ENCODE measurements at regions of chrX and their contacts with region 1.

Region 1: GRCh38 chrX:97267381-97268181 is 383.9 kb downstream of the RPA4 start:
- DNase-seq: no peak
- ATAC-seq: no peak
- H3K4me3 ChIP-seq: no peak overlapping the region
- H3K27ac ChIP-seq: no peak overlapping the region
- H3K4me1 ChIP-seq: peaks cover 0 to 3% (median 0%) of the 10 kb centered on the region in 12 donors
- H3K27me3 ChIP-seq: no peaks in the 10 kb centered on the region
- CTCF ChIP-seq: no peak
- POLR2A ChIP-seq: no peak

Region 2: DNA sequence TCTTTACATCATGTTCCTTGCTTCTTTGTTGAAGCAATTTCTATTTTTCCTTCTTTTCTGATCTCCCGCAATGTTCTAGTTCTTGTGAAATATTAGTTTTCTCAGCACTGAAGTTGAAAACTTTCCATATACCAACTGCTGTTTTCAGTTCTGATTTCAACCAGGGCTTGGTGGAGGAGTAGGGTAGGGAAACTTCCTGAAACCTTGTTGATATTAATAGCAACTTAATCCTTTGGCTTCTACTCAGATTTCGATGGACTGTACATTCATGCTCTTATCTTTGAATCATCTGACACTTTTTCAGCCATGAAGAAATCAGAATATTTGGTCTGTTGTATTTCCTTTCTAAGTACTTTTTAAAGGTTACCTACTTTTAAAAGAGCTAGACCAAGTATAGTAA is 68.1 kb before region 1 on chrX:
- intact Hi-C with region 1: no loop called
- DNase-seq: no peak
- ATAC-seq: no peak
- H3K4me3 ChIP-seq: no peak overlapping the region
- H3K27ac ChIP-seq: no peak overlapping the region
- H3K4me1 ChIP-seq: no peaks in the 10 kb centered on the region
- H3K27me3 ChIP-seq: peaks cover 0 to 6% (median 0%) of the 10 kb centered on the region in 9 donors
- CTCF ChIP-seq: no peak
- POLR2A ChIP-seq: no peak

Region 3: GRCh38 chrX:97229318-97229717 is 38.3 kb before region 1 on chrX:
- intact Hi-C with region 1: loop called in 1 of 10 experiments (anchors 10 kb)
- DNase-seq: no peak
- ATAC-seq: no peak
- H3K4me3 ChIP-seq: no peak overlapping the region
- H3K27ac ChIP-seq: no peak overlapping the region
- H3K4me1 ChIP-seq: no peaks in the 10 kb centered on the region
- H3K27me3 ChIP-seq: no peaks in the 10 kb centered on the region
- CTCF ChIP-seq: no peak
- POLR2A ChIP-seq: no peak

Region 4: GRCh38 chrX:97308171-97308570 is 40.6 kb after region 1 on chrX:
- intact Hi-C with region 1: no loop called
- DNase-seq: no peak
- ATAC-seq: no peak
- H3K4me3 ChIP-seq: no peak overlapping the region
- H3K27ac ChIP-seq: no peak overlapping the region
- H3K4me1 ChIP-seq: no peaks in the 10 kb centered on the region
- H3K27me3 ChIP-seq: peaks cover 0 to 4% (median 0%) of the 10 kb centered on the region in 9 donors
- CTCF ChIP-seq: no peak
- POLR2A ChIP-seq: no peak